Activated CD8-positive, alpha-beta T cell treated with anti-CD3 and anti-CD28 coated beads for 36 hours (primary cell): ENCODE measurements at regions of chr5 and their contacts with region 1.

Region 1: GRCh38 chr5:14364576-14365472 is 216.8 kb upstream of the OTULINL start:
- DNase-seq: peak; percentile 22
- ATAC-seq: no peak
- H3K4me3 Mint-ChIP-seq: no peak overlapping the region
- H3K27ac Mint-ChIP-seq: peak overlapping the region; percentile 37
- H3K4me1 Mint-ChIP-seq: peaks cover 33% of the 10 kb centered on the region
- H3K27me3 Mint-ChIP-seq: no peaks in the 10 kb centered on the region
- CTCF ChIP-seq: peak; percentile 37

Region 2: DNA sequence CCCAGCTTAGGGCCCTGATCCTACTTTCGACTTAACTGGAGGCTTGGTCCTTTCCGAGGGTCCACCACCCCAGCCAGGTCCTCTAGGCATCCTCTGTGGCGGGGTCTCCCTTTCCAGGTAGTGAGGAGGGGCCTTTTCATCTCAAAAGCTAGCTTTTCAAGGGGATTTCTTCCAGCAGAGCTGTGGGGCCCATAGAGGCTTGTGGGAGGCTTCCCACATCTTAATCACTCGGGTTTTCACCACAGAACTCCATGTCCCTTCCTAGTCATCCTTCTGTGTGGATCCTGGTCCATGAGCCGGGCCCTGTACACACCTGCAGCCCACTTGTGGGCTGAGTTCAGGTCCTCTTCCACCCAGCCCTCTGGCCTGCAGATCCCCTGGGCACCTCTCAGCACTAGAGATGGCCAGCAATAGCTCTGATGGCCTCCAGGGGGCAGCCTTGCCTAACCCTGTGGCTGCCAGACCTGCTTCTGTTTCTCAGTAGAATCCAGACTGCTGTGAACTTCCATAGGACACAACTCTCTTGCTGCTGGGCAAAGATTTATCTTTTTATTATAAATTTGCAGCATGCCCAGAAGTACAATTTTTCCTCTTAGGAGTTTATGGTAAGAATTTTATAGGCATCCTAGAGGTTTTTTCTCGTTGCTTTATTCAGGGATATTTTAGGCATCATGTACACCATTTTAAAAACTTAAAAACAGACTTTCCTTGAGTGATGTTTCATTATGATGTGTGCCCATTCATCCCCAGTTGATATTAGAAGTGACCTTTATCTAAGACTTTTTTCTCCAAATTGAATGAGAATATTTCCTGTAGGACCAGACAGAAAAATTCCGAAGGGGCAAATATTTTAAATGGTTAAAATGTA is 12.7 kb before region 1 on chr5:
- CTCF ChIA-PET with region 1: interaction called, 21 read pairs
- POLR2A ChIA-PET with region 1: no interaction called
- intact Hi-C with region 1: no loop called
- DNase-seq: peak; percentile 71
- ATAC-seq: peak; percentile 99
- H3K4me3 Mint-ChIP-seq: no peak overlapping the region
- H3K27ac Mint-ChIP-seq: no peak overlapping the region
- H3K4me1 Mint-ChIP-seq: no peaks in the 10 kb centered on the region
- H3K27me3 Mint-ChIP-seq: peaks cover 1% of the 10 kb centered on the region
- CTCF ChIP-seq: peak; percentile 84

Region 3: DNA sequence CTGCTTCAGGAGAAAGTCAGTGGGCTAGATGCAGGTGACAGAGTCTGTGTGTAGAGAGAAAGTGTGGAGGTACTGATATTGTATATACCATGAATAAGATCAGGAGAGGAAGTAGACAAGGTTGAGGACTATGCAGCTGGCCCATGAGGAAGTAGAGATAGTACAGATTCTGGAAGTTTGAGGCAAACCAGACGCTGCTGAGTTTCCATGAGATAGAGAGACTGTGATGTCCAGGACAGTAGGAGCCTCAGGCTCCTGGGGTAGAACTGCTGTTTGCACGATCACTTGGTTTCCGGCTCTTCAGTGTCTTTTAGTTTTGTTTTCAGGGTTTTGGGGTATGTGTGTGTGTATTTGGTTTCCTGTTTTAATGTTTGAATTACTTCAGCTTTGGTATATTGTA is 230.4 kb after region 1 on chr5:
- CTCF ChIA-PET with region 1: interaction called, 10 read pairs
- POLR2A ChIA-PET with region 1: no interaction called
- intact Hi-C with region 1: no loop called
- DNase-seq: peak; percentile 70
- ATAC-seq: peak; percentile 76
- H3K4me3 Mint-ChIP-seq: peak overlapping the region; percentile 65
- H3K27ac Mint-ChIP-seq: peak overlapping the region; percentile 96
- H3K4me1 Mint-ChIP-seq: peaks cover 92% of the 10 kb centered on the region
- H3K27me3 Mint-ChIP-seq: no peaks in the 10 kb centered on the region
- CTCF ChIP-seq: no peak

Region 4: GRCh38 chr5:14655146-14655741 is 290.4 kb after region 1 on chr5:
- CTCF ChIA-PET with region 1: interaction called, 172 read pairs
- POLR2A ChIA-PET with region 1: no interaction called
- intact Hi-C with region 1: no loop called
- DNase-seq: no peak
- ATAC-seq: peak; percentile 17
- H3K4me3 Mint-ChIP-seq: no peak overlapping the region
- H3K27ac Mint-ChIP-seq: no peak overlapping the region
- H3K4me1 Mint-ChIP-seq: peaks cover 35% of the 10 kb centered on the region
- H3K27me3 Mint-ChIP-seq: peaks cover 4% of the 10 kb centered on the region
- CTCF ChIP-seq: no peak